Common myeloid progenitor, CD34-positive (primary cell): ENCODE measurements at regions of chr22 and their contacts with region 1.

Region 1: GRCh38 chr22:20456064-20456721 is 18.6 kb upstream of the SCARF2 start:
- DNase-seq: peak; percentile 83 to 89 (median 86)
- H3K4me3 ChIP-seq: no peak overlapping the region
- H3K27ac ChIP-seq: no peak overlapping the region
- H3K4me1 ChIP-seq: peaks cover 0 to 4% (median 0%) of the 10 kb centered on the region in 4 experiments
- H3K27me3 ChIP-seq: no peaks in the 10 kb centered on the region

Region 2: DNA sequence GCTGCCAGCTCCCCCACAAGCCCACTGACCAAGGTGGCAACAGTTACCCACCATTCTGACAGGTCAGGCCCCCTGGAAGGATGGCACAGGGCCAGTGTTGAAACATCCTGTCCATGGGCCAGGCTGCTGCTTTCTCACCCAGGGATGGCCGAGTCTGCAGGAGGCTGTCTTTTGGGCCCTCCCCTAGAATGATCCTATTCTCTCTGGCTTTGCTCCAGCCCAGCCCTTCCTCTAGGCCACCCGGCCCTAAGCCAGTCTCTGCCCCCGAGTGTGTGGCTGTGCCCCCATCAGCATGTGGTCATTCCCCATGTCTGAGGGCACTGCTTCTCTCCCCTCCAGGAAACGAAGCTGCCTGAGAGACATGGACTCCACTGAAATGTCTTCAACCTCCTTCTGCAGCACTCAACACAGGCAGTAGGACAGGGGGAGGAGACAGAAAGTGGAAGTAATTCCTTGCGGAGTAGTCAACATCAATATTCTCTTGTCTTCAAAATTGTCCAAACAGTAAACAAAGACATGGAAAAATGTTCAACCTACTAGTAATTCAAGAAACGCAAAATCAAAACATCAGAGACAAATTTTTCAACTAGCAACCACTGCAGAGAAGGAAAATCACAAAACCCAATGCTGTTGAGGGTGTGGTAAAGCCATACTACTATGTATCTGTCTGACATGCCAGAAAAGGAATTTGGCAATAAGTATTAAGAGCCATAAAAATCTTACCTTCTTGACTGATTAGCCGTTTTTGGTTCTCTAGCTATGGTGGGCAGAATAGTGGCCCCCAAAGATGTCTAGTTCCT is 13.5 kb before region 1 on chr22:
- CTCF ChIA-PET with region 1: interaction called, 17 read pairs
- POLR2A ChIA-PET with region 1: no interaction called
- DNase-seq: no peak
- H3K4me3 ChIP-seq: no peak overlapping the region
- H3K27ac ChIP-seq: no peak overlapping the region
- H3K4me1 ChIP-seq: peaks cover 0 to 9% (median 7%) of the 10 kb centered on the region in 4 experiments
- H3K27me3 ChIP-seq: peaks cover 0 to 21% (median 0%) of the 10 kb centered on the region in 5 experiments

Region 3: GRCh38 chr22:20466659-20467379 is 10.6 kb after region 1 on chr22:
- CTCF ChIA-PET with region 1: interaction called, 15 read pairs
- POLR2A ChIA-PET with region 1: no interaction called
- DNase-seq: no peak
- H3K4me3 ChIP-seq: no peak overlapping the region
- H3K27ac ChIP-seq: no peak overlapping the region
- H3K4me1 ChIP-seq: peaks cover 3 to 21% (median 18%) of the 10 kb centered on the region in 4 experiments
- H3K27me3 ChIP-seq: no peaks in the 10 kb centered on the region